ENCODE measurements at regions of chr12 and their contacts with region 1.

Region 1: DNA sequence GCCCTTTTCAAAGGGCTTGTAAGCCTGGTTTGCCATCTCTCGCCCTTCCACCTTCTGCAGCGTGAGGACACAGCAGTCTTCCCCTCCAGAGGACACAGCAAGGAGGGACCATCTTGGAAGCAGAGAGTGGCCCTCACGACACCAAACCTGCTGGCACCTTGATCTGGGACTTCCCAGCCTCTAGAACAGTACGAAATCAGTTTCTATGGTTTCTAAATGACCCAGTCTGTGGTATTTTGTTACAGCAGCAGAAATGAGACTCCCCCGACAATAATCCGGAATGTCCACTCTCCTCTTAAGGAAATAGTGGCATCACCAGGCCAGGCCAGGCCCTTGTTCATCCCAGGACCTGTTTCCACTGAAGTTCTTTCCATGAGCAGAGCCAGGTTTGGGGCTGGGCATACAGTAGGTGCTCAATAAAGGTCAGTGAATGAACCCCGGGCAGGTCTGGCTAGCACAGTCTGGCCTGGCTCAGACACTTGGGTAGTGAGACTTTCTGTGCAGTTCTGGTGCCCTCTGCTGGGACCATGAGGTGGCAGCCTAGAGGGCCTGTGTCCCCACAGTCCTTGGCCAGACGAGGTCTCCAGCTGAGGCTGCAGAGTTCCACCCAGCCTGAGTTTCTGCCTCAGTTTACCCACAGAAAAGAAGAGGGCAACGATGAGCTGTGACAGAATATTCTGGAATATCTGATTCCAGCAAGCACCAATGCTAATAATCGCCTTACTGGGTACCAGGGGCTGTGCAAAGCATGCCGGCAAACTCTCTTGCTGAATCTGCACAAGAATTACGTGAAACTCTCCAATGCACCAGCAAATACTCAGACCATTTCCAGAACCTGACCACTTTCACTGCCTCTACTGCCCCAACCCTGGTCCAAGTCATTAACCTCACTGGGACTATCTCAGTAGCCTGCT is 14.0 kb downstream of the ABCB9 start:
- DNase-seq: peak; percentile 66 to 93 (median 83)

Region 2: GRCh38 chr12:122793685-122794106 is 158.5 kb before region 1 on chr12:
- intact Hi-C with region 1: loop called (anchors 5 kb)
- DNase-seq: peak in 12 of 42 donors; percentile 7 to 66 (median 24)

Region 3: GRCh38 chr12:122820838-122821271 is 131.4 kb before region 1 on chr12:
- intact Hi-C with region 1: no loop called
- DNase-seq: no peak

Region 4: DNA sequence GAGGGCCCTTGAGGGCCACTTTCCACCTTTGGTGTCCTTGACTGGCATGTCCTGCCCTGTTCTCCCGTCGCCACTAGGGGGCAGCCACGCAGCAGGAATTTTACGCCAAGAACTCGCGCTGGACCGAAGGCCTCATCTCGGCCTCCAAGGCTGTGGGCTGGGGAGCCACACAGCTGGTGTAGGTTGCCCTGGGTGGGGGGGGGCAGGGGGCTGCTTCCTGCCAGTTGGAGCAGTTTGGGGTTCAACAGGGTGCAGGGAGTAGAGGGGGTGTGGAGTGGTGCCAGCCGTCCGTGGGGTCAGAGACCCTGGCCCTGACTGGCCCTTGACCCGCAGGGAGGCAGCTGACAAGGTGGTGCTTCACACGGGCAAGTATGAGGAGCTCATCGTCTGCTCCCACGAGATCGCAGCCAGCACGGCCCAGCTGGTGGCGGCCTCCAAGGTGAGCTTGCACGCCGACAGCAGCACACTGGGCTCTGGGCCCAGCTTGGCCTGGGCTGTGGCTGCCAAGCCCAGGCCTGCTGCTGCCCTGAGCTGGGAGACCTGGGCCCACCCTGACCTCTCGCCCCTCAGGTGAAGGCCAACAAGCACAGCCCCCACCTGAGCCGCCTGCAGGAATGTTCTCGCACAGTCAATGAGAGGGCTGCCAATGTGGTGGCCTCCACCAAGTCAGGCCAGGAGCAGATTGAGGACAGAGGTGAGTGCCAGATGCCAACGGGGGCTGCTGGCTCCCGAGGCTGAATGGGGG is 91.7 kb before region 1 on chr12:
- intact Hi-C with region 1: loop called (anchors 5 kb)
- DNase-seq: peak; percentile 70 to 95 (median 88)

Region 5: DNA sequence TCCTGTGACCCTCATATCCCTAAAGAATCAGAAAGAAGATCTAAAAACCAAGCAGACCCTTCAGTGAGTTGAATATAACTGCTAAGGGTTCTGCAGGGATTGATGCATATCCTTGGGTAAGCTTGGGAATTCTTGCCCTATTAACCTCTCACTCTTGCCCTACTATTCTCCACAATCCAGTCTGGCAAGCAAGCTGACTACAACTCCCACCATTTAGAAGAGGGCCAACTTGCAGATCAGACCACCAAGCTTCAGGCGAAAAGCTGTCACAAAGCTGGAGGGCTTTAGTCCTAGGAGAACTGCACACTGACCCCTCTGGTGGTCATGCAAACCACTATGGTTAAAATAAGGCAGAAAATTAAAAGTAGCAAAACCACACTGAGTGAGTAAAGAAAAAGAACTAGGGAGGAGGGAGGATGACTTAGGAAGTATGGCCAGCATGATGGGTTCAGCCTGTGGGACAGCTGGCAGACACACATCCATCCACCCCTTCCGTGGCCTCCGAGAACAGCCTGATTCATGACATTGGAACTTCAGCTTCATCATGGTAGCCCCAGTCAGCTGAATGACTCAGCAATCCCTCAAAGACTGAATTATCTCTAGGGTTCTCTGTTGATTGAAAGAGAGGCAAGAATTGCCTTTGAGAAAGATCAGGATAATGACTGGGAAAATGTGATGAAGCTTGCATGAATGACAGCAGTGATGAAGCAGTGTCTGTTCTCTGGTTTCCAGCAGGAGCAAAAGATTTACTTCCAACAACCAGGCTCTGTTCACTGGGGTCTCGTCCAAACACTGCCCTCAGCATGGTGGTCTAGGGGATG is 174.2 kb after region 1 on chr12:
- intact Hi-C with region 1: no loop called
- DNase-seq: peak in 5 of 42 donors; percentile 25 to 77 (median 47)

Measured in head of caudate nucleus (tissue), 42 donors.